ENCODE measurements at regions of chr13 and their contacts with region 1.

Region 1: DNA sequence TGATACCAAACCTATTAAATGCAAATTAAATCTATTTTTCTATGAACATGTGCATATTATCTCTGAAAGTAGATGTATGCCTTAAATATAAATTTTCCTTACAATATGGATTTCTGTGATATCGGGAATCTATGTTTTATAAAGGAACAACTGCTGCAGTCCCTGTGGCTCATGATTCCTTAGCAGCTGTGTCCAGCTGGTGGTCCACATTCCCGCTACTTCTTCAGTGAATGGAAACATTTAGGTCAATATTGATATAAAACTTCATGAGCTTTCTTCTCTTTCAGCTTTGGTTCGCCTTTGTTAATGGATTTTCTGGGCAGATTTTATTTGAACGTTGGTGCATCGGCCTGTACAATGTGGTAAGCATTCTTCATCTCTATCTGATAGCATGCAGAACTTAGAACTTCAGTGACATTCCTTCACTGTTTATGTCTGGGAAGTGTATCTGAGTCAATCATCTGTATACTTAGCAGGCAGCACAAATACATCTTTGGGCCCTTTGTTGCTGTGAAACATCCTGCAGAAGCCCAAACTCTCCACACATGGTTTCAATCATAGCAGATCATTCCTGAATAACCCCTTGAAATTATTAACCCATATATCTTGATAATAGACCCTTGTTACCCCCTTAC is 223.9 kb downstream of the SHISA2 start:
- DNase-seq: no peak
- H3K4me3 Mint-ChIP-seq: no peak overlapping the region
- H3K27ac Mint-ChIP-seq: no peak overlapping the region
- H3K4me1 Mint-ChIP-seq: peaks cover 2% of the 10 kb centered on the region
- H3K27me3 Mint-ChIP-seq: peaks cover 2% of the 10 kb centered on the region

Region 2: DNA sequence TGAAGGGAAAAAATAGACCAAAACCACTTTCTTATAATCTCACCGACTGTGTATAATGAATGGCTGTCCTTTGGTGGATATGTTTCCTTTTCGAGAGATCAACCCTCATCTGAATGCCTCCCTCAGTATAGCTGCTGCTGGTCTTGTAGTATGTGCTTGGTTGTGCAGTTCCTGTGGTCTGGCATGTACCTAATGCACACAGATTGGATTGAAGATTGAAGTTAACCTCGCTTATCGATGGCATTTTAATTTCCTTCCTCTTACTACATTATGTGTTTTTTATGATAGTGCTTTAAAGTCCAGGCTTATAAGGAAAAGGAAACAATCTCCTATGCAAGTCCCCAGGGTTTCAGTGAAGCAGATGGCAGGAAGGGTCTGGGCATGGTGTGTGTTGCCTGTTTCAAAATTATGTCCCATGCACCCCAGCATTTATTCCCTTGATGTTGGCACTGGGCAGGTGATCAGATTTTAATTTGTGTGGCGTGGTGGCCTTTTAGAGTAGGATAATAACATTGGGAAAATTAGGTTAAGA is 110.2 kb before region 1 on chr13:
- intact Hi-C with region 1: no loop called
- DNase-seq: no peak
- H3K4me3 Mint-ChIP-seq: no peak overlapping the region
- H3K27ac Mint-ChIP-seq: no peak overlapping the region
- H3K4me1 Mint-ChIP-seq: no peaks in the 10 kb centered on the region
- H3K27me3 Mint-ChIP-seq: peaks cover 23% of the 10 kb centered on the region

Region 3: DNA sequence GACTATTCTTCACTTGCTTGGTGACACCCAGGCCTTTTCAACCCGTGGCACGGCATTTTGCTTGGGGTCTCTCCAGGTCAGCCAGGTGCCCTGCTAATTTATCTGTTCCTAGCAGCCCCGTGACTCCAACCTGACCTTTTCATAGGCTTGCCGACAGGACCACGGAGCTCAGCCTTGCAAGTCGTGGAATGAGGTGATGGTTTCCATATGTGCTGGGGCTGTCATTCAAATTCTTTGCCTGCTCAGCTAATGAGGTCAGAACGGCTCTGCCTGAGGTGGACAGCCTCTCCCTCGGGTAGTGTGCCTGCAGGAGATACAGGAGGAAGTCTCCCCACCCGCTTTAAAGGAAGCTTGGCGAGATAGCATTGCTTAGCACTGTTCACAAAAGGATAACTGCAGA is 162.9 kb after region 1 on chr13:
- intact Hi-C with region 1: no loop called
- DNase-seq: peak; percentile 47
- H3K4me3 Mint-ChIP-seq: no peak overlapping the region
- H3K27ac Mint-ChIP-seq: no peak overlapping the region
- H3K4me1 Mint-ChIP-seq: no peaks in the 10 kb centered on the region
- H3K27me3 Mint-ChIP-seq: peaks cover 8% of the 10 kb centered on the region

Region 4: DNA sequence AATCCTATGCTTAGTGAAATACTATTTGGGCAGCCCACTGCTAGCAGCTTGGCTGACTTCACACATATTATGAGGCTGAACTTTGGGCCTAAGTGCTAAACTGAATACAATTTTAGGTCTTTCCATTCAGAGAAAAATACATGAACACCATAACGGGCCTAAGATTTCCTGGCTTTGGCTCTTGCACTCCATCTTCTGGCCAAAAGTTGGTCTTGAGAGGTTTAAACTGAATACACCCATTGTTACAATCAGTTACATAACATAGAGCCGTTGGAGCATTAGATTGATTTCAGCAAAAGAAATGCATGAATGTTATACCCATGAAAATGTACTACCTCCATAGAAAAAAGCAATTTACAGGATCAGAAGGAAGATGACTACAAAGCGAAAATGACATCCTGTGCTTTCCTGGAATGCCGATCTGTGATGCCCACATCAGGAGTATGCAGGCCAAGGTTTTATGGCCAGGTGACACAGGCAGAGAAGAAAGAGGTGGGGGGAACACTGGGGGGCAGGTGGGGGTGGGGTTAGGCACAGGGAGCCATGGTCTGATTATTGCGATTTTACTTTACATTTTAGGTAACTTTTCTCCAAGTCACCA is 235.0 kb after region 1 on chr13:
- intact Hi-C with region 1: loop called (anchors 1 kb)
- DNase-seq: peak; percentile 86
- H3K4me3 Mint-ChIP-seq: no peak overlapping the region
- H3K27ac Mint-ChIP-seq: no peak overlapping the region
- H3K4me1 Mint-ChIP-seq: peaks cover 15% of the 10 kb centered on the region
- H3K27me3 Mint-ChIP-seq: peaks cover 15% of the 10 kb centered on the region

Measured in activated CD4-positive, alpha-beta T cell treated with anti-CD3 and anti-CD28 coated beads, Interleukin-2, amount 10 ng/mL, durations not matched to agents 24 days and 14 days (primary cell).